WTC11 (cell line): ENCODE measurements at regions of chr7 and their contacts with region 1.

Region 1: DNA sequence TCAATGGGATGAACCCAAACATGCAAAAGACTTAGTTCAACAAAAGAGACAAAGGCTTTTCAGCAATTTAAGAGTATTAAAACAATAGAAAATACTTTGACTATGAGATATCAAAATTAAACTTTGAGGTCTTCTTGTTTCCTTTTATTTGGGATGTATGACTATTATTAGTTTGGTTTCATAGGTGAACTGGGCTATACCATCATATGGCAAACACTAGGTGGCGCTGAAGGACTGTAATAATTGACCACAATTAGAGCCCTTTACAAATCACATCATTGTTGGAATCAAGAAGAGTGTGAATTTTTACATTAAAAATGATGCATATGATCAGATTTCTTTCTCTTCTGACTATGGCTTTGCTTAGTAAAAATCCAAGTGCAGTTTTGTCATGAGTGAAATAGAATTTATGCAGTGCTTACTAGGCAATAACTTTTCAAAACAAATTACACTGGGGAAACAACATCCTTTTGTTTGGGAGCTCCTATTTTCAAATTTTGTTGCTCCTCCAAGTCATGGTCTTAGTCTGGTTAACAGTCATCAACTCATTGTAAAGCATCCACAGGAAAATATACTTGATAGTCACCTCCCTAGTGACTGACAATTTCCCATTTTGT is 14.7 kb upstream of the NXPH1 start:
- DNase-seq: peak; percentile 48
- ATAC-seq: peak; percentile 86
- H3K4me3 Mint-ChIP-seq: no peak overlapping the region
- H3K27ac Mint-ChIP-seq: no peak overlapping the region
- H3K4me1 Mint-ChIP-seq: peaks cover 6% of the 10 kb centered on the region
- H3K27me3 Mint-ChIP-seq: no peaks in the 10 kb centered on the region
- CTCF ChIP-seq: peak; percentile 75

Region 2: DNA sequence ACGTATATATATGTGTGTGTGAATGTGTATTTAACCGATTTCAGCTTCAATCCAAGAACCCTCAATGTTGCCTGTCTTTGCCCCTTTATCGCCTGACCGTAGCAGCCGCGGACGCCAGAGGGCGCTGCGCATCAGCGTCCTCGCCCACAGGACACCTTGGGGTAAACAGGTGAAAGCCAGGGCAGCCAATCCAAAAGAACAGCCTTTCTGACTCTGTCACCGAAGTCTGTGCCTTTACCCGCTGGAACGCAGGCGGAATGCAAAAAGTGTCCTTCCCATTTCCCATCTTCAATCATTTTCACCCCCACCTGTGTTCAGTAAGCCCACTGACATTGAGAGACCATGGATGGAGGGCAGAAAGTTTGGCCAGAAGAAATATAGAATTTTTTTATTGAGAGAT is 18.2 kb after region 1 on chr7:
- CTCF ChIA-PET with region 1: interaction called, 10 read pairs
- POLR2A ChIA-PET with region 1: no interaction called
- DNase-seq: peak; percentile 93
- ATAC-seq: peak; percentile 47
- H3K4me3 Mint-ChIP-seq: peak overlapping the region; percentile 76
- H3K27ac Mint-ChIP-seq: no peak overlapping the region
- H3K4me1 Mint-ChIP-seq: peaks cover 62% of the 10 kb centered on the region
- H3K27me3 Mint-ChIP-seq: peaks cover 100% of the 10 kb centered on the region
- CTCF ChIP-seq: peak; percentile 95